Right ventricle myocardium inferior (tissue), 1 donor: ENCODE measurements at regions of chr2 and their contacts with region 1.

Region 1: DNA sequence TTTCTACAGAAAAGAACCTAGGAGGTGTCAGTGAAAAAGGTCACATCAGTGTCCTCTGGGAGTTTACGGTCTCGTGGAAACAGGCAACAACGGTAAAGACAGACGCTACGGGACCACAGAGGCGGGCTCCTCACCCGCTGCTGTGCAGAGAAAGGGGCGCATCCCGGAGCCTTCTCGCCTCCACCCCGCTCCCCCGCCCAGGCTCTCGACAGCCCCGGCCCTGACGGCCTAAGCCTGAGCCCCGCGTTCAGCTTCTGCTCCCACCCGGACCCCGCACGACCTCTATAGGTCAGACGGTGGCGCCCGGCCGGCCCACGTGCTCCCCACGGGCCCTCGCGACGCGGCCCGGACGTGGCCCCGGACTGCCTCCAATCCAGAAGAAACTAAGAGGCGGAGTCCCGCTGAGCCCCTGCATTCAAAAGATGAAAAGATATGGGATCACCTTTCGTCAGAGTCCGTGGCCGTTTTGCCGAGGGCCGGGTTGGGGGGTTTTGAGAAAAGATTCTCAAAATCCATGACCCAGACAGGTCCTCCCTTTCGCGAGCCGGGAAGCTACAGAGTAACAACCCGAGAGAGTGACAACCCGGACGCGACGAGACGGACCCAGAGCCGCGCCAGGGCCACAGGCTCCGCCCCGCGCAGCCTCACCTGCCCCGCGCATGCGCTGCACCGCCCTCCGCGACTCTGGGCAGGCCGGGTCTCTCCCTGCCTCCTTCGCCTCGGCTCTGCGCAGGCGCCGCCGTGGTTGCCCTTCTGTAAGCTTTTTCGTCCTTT is at the start of gene ZC3H8:
- DNase-seq: peak; percentile 98
- ATAC-seq: peak; percentile 100
- total RNA-seq, gene ZC3H8: 10.6 TPM

Region 2: GRCh38 chr2:112054847-112055729 is 199.6 kb before region 1 on chr2 and contains the start of gene TMEM87B:
- intact Hi-C with region 1: loop called (anchors 5 kb)
- DNase-seq: peak; percentile 99
- ATAC-seq: peak; percentile 87
- total RNA-seq, gene TMEM87B: 6.5 TPM

Region 3: GRCh38 chr2:112092286-112093041 is 162.2 kb before region 1 on chr2:
- intact Hi-C with region 1: no loop called
- DNase-seq: no peak
- ATAC-seq: no peak

Region 4: DNA sequence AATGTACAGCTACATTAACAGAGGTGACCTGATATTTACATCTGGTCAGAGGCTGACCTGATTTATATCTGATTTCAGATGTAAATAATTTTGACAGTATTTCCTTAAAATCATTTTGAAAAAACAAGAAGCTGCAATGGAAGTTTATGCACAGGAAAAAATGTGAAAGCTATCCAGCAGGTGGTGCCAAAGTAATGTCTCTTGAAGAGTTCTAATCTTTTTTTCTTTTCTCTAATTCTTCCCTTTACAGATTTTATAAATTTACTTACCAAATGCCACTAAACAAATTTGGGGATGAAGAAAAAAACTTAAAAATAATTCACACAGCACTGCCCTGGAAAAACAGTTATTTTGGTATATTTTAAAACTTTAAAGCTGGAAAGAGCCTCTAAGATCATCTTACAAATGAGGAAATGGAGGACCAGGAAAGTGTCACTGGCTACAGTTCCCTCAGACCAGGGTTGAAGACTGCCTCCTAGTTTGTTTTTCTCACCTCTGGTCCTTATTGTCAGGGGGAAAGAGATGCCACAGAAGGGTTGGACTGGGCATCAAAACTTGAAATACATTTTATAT is 132.9 kb before region 1 on chr2:
- intact Hi-C with region 1: loop called (anchors 10 kb)
- DNase-seq: no peak
- ATAC-seq: no peak

Region 5: DNA sequence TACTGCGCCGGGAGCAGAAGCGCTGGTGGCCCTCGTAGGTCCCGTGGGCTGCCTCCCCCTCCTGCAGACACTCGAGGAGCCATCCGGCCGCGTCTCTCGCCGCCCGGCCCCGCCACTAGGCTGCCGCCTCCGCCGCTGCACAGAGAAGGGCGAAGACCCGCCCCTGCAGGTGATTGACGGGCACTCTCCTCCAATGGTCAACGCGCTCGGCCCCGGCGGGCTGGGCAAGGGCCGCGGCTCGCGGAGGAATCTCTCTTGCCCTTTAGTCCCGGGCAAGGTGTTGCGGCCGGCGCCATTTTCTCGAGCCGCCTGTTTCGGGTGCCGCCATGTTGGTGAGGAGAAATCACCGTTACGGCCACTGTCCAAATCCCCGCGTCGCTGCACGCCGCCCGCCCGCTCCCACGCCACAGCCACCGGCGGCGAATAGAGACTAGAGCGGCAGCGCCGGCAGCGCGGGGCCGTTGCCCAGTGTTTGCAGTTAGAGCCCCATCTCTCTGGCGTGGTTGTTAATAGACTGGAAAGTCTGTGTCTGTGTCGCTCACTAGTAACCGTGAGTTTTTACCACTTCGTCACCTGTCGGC is 20.7 kb after region 1 on chr2 and contains the start of gene ZC3H6:
- intact Hi-C with region 1: loop called (anchors 2 kb)
- DNase-seq: peak; percentile 99
- ATAC-seq: peak; percentile 99
- total RNA-seq, gene ZC3H6: 16.1 TPM

Region 6: GRCh38 chr2:112301171-112301584 is 46.5 kb after region 1 on chr2:
- intact Hi-C with region 1: no loop called
- DNase-seq: no peak
- ATAC-seq: no peak

Region 7: DNA sequence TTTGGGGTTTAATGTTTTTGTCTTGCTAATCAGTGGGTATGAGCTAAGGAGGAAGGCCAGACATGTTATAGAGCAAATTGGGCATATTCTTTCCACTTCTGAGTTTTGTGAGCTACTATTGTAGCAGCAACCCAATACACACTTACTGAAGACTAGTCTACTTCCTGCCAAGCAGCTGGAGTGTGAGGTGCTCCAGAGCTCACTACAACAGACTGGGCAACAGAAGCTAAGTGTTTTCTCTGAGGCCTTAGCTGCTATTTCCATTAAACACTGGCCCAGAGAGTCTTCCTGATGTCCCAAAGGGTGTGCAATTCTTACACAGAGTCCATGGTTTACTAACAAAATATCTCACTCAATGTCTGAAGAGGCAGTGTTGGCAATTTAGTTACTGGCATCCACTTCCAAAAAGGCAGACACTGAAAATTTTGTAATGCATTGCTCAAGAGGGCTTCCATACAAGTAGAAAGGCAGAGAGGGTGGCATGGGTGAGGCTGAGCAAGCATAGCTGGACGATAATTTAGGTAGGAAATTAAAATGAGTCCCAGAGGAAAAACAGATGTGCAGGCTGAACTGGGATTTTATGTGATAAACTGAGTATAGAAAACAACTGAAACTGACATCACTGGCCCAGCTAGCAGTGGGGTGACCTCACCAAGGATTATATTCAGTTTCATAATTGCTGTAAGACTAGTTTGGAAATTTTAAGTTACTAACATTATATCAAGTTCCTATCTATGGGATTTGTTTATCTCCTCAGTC is 89.4 kb after region 1 on chr2:
- intact Hi-C with region 1: no loop called
- DNase-seq: no peak
- ATAC-seq: peak; percentile 56